HEK293 (cell line): ENCODE measurements at regions of chr3 and their contacts with region 1.

Region 1: GRCh38 chr3:190384241-190384863 is 3.6 kb upstream of the CLDN16 start:
- H3K4me3 ChIP-seq: no peak overlapping the region
- H3K27ac ChIP-seq: no peak overlapping the region
- H3K4me1 ChIP-seq: no peaks in the 10 kb centered on the region
- CTCF ChIP-seq: peak; percentile 50

Region 2: DNA sequence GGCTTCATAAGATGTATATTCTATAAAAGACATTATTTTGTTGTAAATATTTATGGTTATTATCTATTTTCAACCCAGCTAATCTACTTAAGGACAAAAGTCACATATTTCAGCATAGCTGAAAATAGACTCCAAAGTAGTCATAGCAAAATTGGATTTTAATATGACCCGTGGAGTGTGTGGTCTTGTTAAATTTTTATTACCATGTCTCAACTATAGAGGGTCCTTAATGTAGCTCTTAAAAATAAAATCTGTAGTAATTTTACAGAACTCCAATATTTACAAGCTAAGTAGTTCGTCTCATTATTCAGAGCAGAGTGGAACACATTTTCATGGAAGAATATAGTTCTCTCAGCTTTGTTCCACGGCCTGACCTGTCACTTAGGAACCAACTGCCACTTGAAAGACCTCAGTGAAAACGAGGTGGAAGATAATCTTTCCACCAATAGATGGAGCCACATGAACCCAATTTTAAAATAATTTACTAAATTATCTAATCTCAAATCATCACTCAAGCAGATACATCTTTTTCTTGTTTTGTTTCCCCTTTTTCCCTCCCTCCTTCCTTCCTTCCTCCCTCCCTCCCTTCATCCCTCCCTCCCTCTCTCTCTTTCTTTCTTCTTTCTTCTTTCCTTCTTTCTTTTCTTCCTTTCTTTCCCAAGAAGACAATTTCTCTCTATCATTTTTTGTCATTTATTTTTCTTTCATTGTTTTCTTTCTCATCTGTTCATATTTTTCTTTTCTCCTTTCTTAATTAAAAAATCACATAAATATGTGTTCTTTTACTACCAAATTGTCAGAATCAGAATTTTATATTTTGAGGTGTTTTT is 159.3 kb before region 1 on chr3:
- CTCF ChIA-PET with region 1: interaction called, 11 read pairs
- POLR2A ChIA-PET with region 1: no interaction called
- H3K4me3 ChIP-seq: no peak overlapping the region
- H3K27ac ChIP-seq: no peak overlapping the region
- H3K4me1 ChIP-seq: no peaks in the 10 kb centered on the region
- CTCF ChIP-seq: no peak

Region 3: DNA sequence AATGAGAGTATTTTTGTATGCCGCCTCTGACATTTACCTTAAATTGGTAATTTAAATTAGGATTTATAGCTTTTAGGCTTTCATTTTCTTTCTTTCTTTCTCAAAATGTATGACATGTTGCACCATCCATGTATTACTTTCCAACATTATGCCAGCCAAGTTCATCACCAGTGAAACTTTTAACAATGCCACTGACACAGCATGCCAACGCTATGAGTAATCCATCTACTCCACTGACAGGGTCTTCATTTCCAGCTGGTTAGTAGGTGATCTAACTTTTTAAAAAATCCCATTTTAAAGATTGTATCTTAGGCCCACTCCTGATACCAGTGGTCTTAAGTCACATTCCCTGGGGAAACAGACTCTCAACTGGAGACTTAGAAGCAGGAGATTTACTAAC is 18.2 kb before region 1 on chr3:
- CTCF ChIA-PET with region 1: no interaction called
- POLR2A ChIA-PET with region 1: no interaction called
- H3K4me3 ChIP-seq: no peak overlapping the region
- H3K27ac ChIP-seq: no peak overlapping the region
- H3K4me1 ChIP-seq: no peaks in the 10 kb centered on the region
- CTCF ChIP-seq: no peak